Activated CD4-positive, alpha-beta memory T cell treated with anti-CD3 and anti-CD28 coated beads for 36 hours (primary cell): ENCODE measurements at regions of chr11 and their contacts with region 1.

Region 1: DNA sequence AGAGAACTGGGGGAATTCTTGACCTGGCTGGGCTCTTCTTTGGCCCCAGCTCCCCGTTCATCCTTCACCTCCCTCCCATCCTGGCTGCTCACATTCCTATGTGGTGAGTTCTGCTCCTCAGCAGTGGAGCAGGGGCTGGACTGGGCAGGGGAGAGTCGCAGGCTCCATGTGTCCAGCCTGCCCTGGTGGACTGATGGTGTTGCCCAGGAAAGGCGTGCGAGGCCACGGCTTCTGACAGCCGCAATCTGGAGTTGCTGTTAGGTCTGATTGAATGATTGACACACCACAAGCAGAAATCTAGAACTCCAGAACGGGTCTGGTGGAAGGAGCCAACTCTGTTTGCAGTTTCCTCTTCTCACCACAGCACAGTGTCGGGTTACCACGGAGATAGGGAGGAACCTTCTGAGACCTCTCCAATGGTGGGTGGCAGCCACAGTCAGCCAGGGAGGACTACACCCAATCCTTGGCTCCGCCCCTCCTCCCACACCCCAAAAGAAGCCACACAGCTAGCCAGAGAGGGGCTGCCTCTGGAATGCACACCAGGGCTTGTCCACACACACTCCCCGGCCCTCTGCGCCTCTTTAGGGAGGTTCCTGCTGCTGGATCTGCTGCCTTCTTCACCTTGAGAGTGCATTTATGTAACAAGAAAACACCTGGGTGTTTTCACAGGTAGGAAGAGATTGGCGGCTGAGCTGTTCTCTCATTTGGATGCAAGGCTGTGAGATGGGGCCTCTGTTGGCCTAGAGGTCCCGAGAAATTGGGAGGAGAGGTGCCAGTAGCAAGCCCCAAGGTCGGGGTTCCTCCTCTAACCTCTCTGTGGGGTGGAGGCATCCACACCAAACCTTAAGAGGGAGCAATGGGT is 56.4 kb upstream of the CD44 start:
- DNase-seq: peak; percentile 90
- H3K4me3 Mint-ChIP-seq: peak overlapping the region; percentile 62
- H3K27ac Mint-ChIP-seq: peak overlapping the region; percentile 81
- H3K4me1 Mint-ChIP-seq: peaks cover 93% of the 10 kb centered on the region
- H3K27me3 Mint-ChIP-seq: no peaks in the 10 kb centered on the region

Region 2: DNA sequence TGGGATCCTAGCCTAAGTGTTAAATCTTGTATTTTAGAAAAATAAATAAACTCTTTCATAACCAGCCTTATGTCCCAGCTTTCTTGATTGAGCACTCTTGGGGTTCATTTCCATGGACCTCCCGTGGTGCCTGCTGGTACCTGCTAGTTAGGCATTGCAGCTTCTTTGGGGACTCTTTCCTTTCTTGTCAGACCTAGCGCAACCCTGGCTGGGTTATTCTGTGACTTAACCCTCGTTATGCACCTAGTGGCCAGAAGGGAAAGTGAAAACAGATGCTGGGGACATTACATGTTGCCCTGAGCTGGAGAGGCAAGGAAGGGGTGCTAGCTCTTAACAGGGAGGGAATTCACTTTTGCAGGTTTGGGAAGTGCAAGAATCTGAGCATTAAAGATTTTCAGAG is 213.1 kb before region 1 on chr11:
- CTCF ChIA-PET with region 1: no interaction called
- POLR2A ChIA-PET with region 1: no interaction called
- intact Hi-C with region 1: no loop called
- DNase-seq: no peak
- H3K4me3 Mint-ChIP-seq: no peak overlapping the region
- H3K27ac Mint-ChIP-seq: no peak overlapping the region
- H3K4me1 Mint-ChIP-seq: no peaks in the 10 kb centered on the region
- H3K27me3 Mint-ChIP-seq: no peaks in the 10 kb centered on the region

Region 3: DNA sequence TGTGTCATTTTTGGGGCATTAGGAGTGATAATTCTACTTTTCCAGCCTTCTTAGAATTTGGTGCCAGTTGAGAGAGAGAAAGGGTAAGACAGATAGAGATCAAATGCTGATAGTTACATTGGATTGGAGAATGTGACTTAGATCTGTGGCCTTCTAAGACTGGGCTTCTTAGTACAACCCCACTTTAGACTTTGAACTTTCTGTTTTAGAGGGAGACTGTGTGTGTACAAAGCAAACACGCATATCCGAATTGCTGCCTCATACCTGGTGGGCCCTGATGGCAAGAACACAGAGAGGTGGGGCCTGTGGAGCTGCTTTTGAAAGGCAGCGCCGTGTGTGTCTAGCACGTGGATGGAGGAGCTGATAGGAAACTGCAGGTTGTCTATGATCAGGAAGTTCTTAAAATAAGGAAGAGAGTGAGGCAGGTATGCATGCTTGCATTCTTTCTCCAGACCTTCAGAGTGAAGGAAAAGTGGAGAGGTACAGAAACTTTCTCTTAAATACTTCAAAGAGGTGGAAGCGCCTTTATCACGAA is 152.7 kb before region 1 on chr11:
- CTCF ChIA-PET with region 1: no interaction called
- POLR2A ChIA-PET with region 1: no interaction called
- intact Hi-C with region 1: no loop called
- DNase-seq: no peak
- H3K4me3 Mint-ChIP-seq: no peak overlapping the region
- H3K27ac Mint-ChIP-seq: no peak overlapping the region
- H3K4me1 Mint-ChIP-seq: peaks cover 15% of the 10 kb centered on the region
- H3K27me3 Mint-ChIP-seq: no peaks in the 10 kb centered on the region

Region 4: DNA sequence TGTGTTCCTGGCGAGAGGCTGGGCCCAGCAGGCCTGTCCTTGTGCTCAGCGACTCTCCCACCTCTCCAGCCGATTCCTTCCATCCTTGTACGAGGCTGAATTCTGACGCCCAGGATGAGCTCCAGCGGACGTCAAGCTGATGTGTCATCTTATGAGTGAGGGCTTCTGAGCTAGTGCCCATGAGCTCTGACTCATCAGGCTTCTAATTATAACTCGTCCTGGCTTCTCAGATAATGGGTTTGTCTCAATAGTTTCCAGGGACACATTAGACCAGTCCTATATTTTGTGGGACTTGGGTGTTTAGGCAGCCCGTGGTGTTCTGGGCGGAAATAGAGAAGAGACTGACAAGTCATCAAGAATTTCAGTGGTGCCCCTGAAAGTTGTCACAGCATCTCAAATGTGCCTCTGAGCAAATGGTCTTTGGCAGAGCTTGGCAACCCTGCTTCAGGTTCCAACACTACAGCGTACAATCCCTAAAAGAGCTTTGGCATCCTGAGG is 51.8 kb before region 1 on chr11:
- CTCF ChIA-PET with region 1: no interaction called
- POLR2A ChIA-PET with region 1: no interaction called
- intact Hi-C with region 1: loop called (anchors 1 kb)
- DNase-seq: peak; percentile 68
- H3K4me3 Mint-ChIP-seq: peak overlapping the region; percentile 69
- H3K27ac Mint-ChIP-seq: peak overlapping the region; percentile 90
- H3K4me1 Mint-ChIP-seq: peaks cover 46% of the 10 kb centered on the region
- H3K27me3 Mint-ChIP-seq: no peaks in the 10 kb centered on the region

Region 5: DNA sequence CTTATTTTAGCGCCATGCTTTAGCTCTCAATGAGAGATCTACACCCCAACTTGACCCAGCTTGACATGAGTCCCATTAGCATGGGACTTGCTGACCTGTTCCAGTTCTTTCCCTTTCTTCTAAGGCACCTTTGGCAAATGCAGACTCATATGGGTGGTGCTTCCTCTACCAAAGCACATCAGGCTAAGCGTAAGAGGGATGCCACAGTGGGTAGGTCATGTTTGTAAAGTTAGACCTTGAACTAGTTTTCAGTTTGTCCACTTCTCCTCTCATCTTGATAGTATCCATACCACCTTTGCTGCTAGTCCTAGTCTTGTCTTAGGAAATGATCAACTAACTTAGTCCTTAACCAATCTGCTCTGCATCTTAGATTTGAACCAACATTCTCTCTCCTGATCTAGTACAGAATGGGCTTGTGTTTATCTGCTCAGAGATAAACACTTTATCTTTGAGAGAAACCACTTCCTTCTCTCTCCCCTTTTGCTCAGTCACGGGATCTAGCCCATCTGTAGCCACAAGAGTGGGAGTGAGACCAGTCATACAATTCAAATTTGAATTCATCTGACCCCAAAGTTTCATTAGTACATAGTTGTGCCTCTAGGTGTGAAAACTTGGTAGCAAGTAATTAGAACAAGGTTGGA is 15.6 kb before region 1 on chr11:
- CTCF ChIA-PET with region 1: interaction called, 3 read pairs
- POLR2A ChIA-PET with region 1: interaction called, 4 read pairs
- intact Hi-C with region 1: loop called (anchors 1 kb)
- DNase-seq: peak; percentile 74
- H3K4me3 Mint-ChIP-seq: no peak overlapping the region
- H3K27ac Mint-ChIP-seq: peak overlapping the region; percentile 52
- H3K4me1 Mint-ChIP-seq: peaks cover 36% of the 10 kb centered on the region
- H3K27me3 Mint-ChIP-seq: no peaks in the 10 kb centered on the region

Region 6: GRCh38 chr11:35106595-35106994 is 24.0 kb after region 1 on chr11:
- CTCF ChIA-PET with region 1: no interaction called
- POLR2A ChIA-PET with region 1: no interaction called
- intact Hi-C with region 1: no loop called
- DNase-seq: no peak
- H3K4me3 Mint-ChIP-seq: no peak overlapping the region
- H3K27ac Mint-ChIP-seq: no peak overlapping the region
- H3K4me1 Mint-ChIP-seq: peaks cover 46% of the 10 kb centered on the region
- H3K27me3 Mint-ChIP-seq: no peaks in the 10 kb centered on the region

Region 7: GRCh38 chr11:35126000-35126878 is 43.7 kb after region 1 on chr11:
- CTCF ChIA-PET with region 1: no interaction called
- POLR2A ChIA-PET with region 1: no interaction called
- intact Hi-C with region 1: loop called (anchors 1 kb)
- DNase-seq: peak; percentile 73
- H3K4me3 Mint-ChIP-seq: peak overlapping the region; percentile 41
- H3K27ac Mint-ChIP-seq: peak overlapping the region; percentile 82
- H3K4me1 Mint-ChIP-seq: peaks cover 65% of the 10 kb centered on the region
- H3K27me3 Mint-ChIP-seq: no peaks in the 10 kb centered on the region

Region 8: DNA sequence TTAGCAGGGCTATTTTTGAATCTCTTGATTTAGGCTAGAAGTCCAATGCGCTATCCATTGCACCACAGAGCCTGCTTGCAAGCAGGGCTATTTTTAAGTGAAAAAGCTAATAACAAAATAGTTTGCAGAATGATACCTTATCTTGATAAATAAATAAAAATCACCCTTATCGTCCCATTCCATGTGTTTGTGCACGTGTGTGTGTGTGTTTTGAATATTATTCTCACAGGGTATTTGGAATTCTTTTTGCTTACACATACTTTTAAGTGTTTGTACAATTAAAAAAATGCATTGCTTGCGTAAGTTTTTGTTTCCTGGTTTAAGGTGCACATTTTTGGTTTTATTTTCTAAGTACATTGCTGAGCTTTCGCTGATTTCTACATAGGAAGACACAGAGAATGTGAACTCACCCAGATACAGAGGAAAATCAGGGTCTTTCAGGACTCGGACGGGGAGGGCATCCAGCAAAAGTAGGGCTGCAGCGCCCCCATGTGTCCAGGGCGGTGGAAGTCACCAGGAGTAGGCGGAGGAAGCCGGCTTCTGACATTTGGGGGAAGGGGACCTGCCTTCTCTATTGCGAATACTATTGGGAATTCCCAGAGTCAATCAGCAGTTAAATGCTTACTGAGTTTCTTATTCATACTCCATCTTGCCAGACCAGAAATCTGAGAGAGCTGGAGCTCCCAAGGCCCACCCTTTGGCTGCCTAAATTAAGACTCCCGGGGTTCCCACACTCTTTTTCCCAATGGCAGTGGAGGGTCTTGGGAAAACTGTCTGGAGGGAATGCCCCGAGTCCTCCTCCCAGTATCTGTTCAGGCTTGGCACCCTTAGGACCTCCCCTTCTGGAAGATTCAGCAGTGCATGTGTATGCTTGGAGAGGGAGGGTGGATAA is 309.6 kb after region 1 on chr11:
- CTCF ChIA-PET with region 1: no interaction called
- POLR2A ChIA-PET with region 1: no interaction called
- intact Hi-C with region 1: no loop called
- DNase-seq: peak; percentile 89
- H3K4me3 Mint-ChIP-seq: no peak overlapping the region
- H3K27ac Mint-ChIP-seq: no peak overlapping the region
- H3K4me1 Mint-ChIP-seq: peaks cover 29% of the 10 kb centered on the region
- H3K27me3 Mint-ChIP-seq: peaks cover 4% of the 10 kb centered on the region